Thyroid gland (tissue), 4 donors: ENCODE measurements at regions of chr7 and their contacts with region 1.

Region 1: GRCh38 chr7:116601426-116601825 is 70.6 kb upstream of the MET start:
- DNase-seq: no peak
- H3K4me3 ChIP-seq: no peak overlapping the region
- H3K27ac ChIP-seq: no peak overlapping the region
- H3K4me1 ChIP-seq: no peaks in the 10 kb centered on the region
- H3K27me3 ChIP-seq: no peaks in the 10 kb centered on the region
- CTCF ChIP-seq: no peak
- POLR2A ChIP-seq: no peak

Region 2: GRCh38 chr7:116665332-116665996 is 64.0 kb after region 1 on chr7:
- intact Hi-C with region 1: loop called (anchors 10 kb)
- DNase-seq: peak; percentile 82 to 84
- H3K4me3 ChIP-seq: no peak overlapping the region
- H3K27ac ChIP-seq: peak overlapping the region in 1 of 3 donors; percentile 7
- H3K4me1 ChIP-seq: peaks cover 0 to 6% of the 10 kb centered on the region in 2 donors
- H3K27me3 ChIP-seq: no peaks in the 10 kb centered on the region
- CTCF ChIP-seq: no peak
- POLR2A ChIP-seq: no peak